ENCODE measurements at regions of chr15 and their contacts with region 1.

Region 1: GRCh38 chr15:71437404-71438318 is 322.4 kb downstream of the THSD4 start:
- DNase-seq: no peak
- H3K4me3 ChIP-seq: no peak overlapping the region
- CTCF ChIP-seq: no peak
- POLR2A ChIP-seq: no peak

Region 2: GRCh38 chr15:70955151-70955550 is 482.5 kb before region 1 on chr15:
- intact Hi-C with region 1: no loop called
- DNase-seq: no peak
- H3K4me3 ChIP-seq: no peak overlapping the region
- CTCF ChIP-seq: no peak
- POLR2A ChIP-seq: no peak

Region 3: GRCh38 chr15:71386448-71387236 is 51.0 kb before region 1 on chr15:
- intact Hi-C with region 1: loop called (anchors 10 kb)
- DNase-seq: no peak
- H3K4me3 ChIP-seq: no peak overlapping the region
- CTCF ChIP-seq: no peak
- POLR2A ChIP-seq: no peak

Measured in lower leg skin (tissue), 4 donors.